CD4-positive, alpha-beta memory T cell (primary cell): ENCODE measurements at regions of chr16 and their contacts with region 1.

Region 1: GRCh38 chr16:50763211-50763610 is 21.3 kb downstream of the CYLD start:
- DNase-seq: no peak
- H3K4me3 ChIP-seq: no peak overlapping the region
- H3K4me3 Mint-ChIP-seq: peak overlapping the region in 7 of 8 donors; percentile 6 to 79 (median 71)
- H3K27ac ChIP-seq: no peak overlapping the region
- H3K27ac Mint-ChIP-seq: peak overlapping the region in 5 of 7 donors; percentile 26 to 77 (median 47)
- H3K4me1 ChIP-seq: peaks cover 99% of the 10 kb centered on the region
- H3K4me1 Mint-ChIP-seq: peaks cover 71 to 97% (median 84%) of the 10 kb centered on the region in 4 donors
- H3K27me3 ChIP-seq: no peaks in the 10 kb centered on the region
- H3K27me3 Mint-ChIP-seq: no peaks in the 10 kb centered on the region

Region 2: GRCh38 chr16:48892893-48893292 is 1870.3 kb before region 1 on chr16:
- CTCF ChIA-PET with region 1: no interaction called
- POLR2A ChIA-PET with region 1: no interaction called
- intact Hi-C with region 1: no loop called
- DNase-seq: no peak
- H3K4me3 ChIP-seq: no peak overlapping the region
- H3K4me3 Mint-ChIP-seq: no peak overlapping the region
- H3K27ac ChIP-seq: no peak overlapping the region
- H3K27ac Mint-ChIP-seq: no peak overlapping the region
- H3K4me1 ChIP-seq: no peaks in the 10 kb centered on the region
- H3K4me1 Mint-ChIP-seq: no peaks in the 10 kb centered on the region
- H3K27me3 ChIP-seq: no peaks in the 10 kb centered on the region
- H3K27me3 Mint-ChIP-seq: no peaks in the 10 kb centered on the region

Region 3: DNA sequence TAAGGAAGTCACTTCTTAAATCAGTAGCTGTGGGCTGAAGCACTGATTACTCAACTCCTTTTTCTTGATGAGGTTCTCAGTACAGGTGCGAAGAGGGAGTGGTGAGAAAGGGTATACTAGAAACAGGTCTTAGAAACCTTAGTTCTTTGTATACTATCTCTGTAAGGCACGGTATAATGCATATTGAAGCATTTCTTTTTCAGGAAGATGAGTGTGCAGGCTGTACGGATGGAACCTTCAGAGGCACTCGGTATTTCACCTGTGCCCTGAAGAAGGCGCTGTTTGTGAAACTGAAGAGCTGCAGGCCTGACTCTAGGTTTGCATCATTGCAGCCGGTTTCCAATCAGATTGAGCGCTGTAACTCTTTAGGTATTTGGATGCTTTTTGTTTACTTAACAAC is 17.8 kb after region 1 on chr16:
- CTCF ChIA-PET with region 1: interaction called, 7 read pairs
- POLR2A ChIA-PET with region 1: interaction called, 25 read pairs
- intact Hi-C with region 1: loop called (anchors 2 kb)
- DNase-seq: peak in 4 of 5 donors; percentile 33 to 59 (median 49)
- H3K4me3 ChIP-seq: no peak overlapping the region
- H3K4me3 Mint-ChIP-seq: peak overlapping the region; percentile 40 to 86 (median 77)
- H3K27ac ChIP-seq: peak overlapping the region; percentile 32
- H3K27ac Mint-ChIP-seq: peak overlapping the region; percentile 88 to 98 (median 95)
- H3K4me1 ChIP-seq: peaks cover 63% of the 10 kb centered on the region
- H3K4me1 Mint-ChIP-seq: peaks cover 40 to 74% (median 53%) of the 10 kb centered on the region in 4 donors
- H3K27me3 ChIP-seq: no peaks in the 10 kb centered on the region
- H3K27me3 Mint-ChIP-seq: no peaks in the 10 kb centered on the region

Region 4: DNA sequence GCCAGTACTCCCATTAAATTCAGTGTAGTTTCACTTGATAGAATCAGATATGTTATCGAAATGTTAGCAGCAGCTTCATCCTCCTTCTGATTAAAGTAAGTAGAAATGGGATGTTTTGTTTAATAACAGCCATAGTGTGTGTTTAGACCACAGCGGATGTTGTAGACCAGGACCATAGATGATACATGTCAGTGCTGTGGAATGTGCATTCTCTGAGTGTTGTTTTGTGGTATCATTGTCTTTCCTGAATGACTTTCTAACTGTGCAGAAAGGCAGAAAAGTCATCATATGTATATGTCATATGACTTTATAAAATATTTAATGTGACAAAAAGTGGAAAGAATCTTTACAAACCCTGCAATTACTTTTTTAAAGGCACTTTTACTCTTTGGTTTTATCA is 34.2 kb after region 1 on chr16:
- CTCF ChIA-PET with region 1: interaction called, 3 read pairs
- POLR2A ChIA-PET with region 1: interaction called, 3 read pairs
- intact Hi-C with region 1: loop called (anchors 5 kb)
- DNase-seq: no peak
- H3K4me3 ChIP-seq: no peak overlapping the region
- H3K4me3 Mint-ChIP-seq: no peak overlapping the region
- H3K27ac ChIP-seq: no peak overlapping the region
- H3K27ac Mint-ChIP-seq: peak overlapping the region in 6 of 7 donors; percentile 36 to 67 (median 55)
- H3K4me1 ChIP-seq: no peaks in the 10 kb centered on the region
- H3K4me1 Mint-ChIP-seq: peaks cover 2 to 16% (median 7%) of the 10 kb centered on the region in 4 donors
- H3K27me3 ChIP-seq: no peaks in the 10 kb centered on the region
- H3K27me3 Mint-ChIP-seq: no peaks in the 10 kb centered on the region

Region 5: DNA sequence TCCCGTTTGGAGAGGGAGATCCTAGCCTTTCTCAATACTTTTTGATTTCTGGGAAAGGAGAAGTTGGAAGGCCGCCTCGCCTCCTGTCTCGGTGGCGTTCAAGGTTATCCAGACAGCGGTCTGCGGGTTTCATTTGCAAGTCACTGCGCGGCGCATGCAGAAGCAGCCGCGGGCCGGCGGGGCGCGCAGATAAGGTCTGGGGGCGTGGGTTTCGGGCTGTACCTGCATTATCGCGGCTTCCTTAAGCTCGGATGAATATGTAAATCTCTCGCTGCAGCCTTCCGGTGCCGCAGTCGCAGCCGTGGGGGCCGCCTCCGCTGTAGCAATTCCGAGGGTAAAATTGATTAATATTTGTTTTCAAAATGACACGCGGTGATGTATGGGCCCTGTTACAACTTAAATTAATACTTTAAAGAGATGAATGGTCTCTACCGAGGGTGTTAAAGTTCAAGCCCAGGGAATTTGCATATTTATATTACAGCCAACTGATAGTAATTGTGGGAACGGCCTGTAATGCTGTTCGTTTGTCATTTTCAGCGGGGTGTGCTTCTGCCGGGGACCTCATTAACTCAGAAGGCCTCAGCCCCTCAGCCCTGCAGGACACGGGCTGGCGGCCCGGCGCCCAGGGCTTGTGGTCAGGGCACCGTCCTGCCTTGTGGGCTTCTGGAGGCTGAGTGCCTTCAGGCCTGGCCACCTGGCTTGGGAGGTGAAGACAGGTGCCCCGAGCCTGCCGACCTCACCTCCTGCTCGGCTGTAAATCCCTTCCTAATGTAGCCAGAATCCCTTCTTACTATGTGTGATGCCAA is 78.1 kb after region 1 on chr16:
- CTCF ChIA-PET with region 1: no interaction called
- POLR2A ChIA-PET with region 1: no interaction called
- intact Hi-C with region 1: no loop called
- DNase-seq: peak; percentile 22 to 47 (median 28)
- H3K4me3 ChIP-seq: peak overlapping the region; percentile 17 to 38
- H3K4me3 Mint-ChIP-seq: peak overlapping the region; percentile 84 to 94 (median 89)
- H3K27ac ChIP-seq: no peak overlapping the region
- H3K27ac Mint-ChIP-seq: peak overlapping the region in 6 of 7 donors; percentile 24 to 81 (median 45)
- H3K4me1 ChIP-seq: peaks cover 6% of the 10 kb centered on the region
- H3K4me1 Mint-ChIP-seq: peaks cover 5 to 30% (median 16%) of the 10 kb centered on the region in 4 donors
- H3K27me3 ChIP-seq: no peaks in the 10 kb centered on the region
- H3K27me3 Mint-ChIP-seq: peaks cover 0 to 1% of the 10 kb centered on the region in 2 donors